OCI-LY7 (cell line): ENCODE measurements at regions of chr14 and their contacts with region 1.

Region 1: GRCh38 chr14:86462193-86462753 is 932.3 kb downstream of the FLRT2 start:
- DNase-seq: peak; percentile 14
- H3K4me3 ChIP-seq: no peak overlapping the region
- H3K27ac ChIP-seq: no peak overlapping the region
- H3K4me1 ChIP-seq: no peaks in the 10 kb centered on the region
- CTCF ChIP-seq: peak; percentile 74

Region 2: DNA sequence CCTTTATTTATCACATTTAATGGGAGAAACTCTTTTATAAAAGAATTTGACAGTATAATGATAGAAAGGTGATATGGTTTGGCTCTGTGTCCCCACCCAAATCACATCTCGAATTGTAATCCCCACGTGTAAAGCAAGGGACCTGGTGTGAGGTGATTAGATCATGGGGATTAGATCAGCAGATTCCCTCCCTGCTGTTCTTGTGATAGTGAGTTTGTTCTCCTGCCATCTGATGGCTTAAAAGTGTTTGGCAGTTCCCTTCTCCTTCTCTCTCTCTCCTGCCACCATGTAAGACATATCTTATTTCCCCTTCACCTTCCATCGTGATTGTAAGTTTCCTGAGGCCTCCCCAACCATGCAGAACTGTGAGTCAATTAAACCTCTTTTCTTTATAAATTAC is 178.0 kb after region 1 on chr14:
- CTCF ChIA-PET with region 1: no interaction called
- POLR2A ChIA-PET with region 1: no interaction called
- intact Hi-C with region 1: loop called (anchors 5 kb)
- DNase-seq: no peak
- H3K4me3 ChIP-seq: no peak overlapping the region
- H3K27ac ChIP-seq: no peak overlapping the region
- H3K4me1 ChIP-seq: no peaks in the 10 kb centered on the region
- CTCF ChIP-seq: no peak

Region 3: DNA sequence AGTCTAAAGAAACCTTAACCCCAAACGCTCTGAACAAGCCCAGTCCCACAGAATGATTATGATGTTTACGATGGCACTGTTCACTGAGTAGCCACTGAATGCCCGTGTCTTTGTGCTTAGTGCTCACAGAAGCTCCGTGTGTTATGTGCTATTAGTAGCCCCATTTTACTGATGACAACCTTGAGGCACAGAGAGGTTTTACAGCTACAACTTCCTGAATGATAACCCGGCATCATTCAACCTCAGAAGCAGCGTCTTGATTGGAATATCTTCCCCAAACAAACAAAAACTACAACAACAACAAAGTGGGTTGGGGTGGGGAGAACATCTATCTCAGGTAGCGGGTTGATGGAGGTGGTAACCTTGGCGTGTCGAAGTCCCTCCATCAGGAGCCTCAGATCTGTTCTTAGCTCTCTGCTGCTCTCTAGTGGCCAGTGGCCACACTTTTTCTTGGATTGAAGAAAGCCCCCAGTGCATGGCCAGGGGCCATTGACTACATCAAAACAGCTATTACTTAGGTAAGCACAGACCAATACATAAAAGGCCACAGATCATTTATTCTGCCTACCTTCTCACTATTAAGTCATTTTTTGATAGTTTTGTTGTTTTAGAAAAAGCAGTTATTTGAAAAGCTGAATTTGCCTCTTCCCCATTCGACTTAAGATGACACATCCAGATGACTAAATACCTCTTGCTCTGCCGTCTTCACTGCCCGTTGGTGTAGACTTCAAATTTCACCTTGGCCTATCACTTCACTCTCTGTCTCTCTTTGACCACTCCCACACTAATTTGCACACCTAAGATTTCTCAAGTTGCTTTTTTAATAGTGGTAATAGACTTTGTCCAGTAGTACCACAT is 1153.8 kb after region 1 on chr14:
- CTCF ChIA-PET with region 1: no interaction called
- POLR2A ChIA-PET with region 1: no interaction called
- intact Hi-C with region 1: loop called (anchors 5 kb)
- DNase-seq: peak; percentile 83
- H3K4me3 ChIP-seq: no peak overlapping the region
- H3K27ac ChIP-seq: peak overlapping the region; percentile 28
- H3K4me1 ChIP-seq: peaks cover 29% of the 10 kb centered on the region
- CTCF ChIP-seq: peak; percentile 92

Region 4: GRCh38 chr14:87896393-87897380 is 1434.4 kb after region 1 on chr14:
- CTCF ChIA-PET with region 1: no interaction called
- POLR2A ChIA-PET with region 1: no interaction called
- intact Hi-C with region 1: loop called (anchors 2 kb)
- DNase-seq: peak; percentile 59
- H3K4me3 ChIP-seq: no peak overlapping the region
- H3K27ac ChIP-seq: no peak overlapping the region
- H3K4me1 ChIP-seq: no peaks in the 10 kb centered on the region
- CTCF ChIP-seq: peak; percentile 95